ENCODE measurements at regions of chr10 and their contacts with region 1.

Region 1: DNA sequence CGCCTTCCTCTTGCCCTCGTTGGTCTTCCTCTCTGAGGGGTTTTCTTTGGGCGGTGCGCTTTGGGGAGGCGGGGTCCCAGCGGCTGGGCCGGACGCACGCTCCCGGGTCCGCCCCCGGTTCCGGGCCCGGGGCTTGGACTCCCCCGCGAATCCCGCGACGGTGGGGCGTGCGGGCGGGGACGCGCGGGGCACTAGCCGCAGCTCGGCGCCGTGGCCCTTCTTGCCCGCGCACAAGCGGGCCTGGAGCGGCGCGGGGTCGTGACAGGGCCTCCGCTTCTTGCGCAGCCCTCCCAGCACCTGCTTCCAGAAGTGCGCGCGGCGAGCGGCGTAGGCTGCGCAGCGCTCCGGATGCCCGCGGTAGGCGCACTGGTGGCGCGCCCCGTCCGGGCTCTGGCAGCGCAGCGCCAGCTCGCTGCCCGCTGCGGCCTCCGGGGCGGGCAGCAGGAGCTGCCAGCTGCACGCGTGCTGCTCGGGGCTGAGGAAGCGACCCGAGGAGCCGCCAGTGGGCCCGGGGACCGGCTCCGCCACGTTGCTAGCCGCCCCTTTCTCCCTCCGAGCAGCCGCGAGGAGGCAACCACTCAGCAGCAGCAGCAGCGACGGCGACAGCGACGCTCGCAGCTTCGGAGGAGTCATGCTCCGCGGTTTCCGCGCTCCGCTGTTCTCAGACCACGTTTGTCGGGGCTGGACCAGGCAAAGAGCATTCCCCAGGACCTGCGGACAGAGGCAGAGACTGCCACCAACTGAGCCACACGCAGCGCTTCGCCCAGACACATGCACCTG is 759 bp downstream of the FGFBP3 start:
- DNase-seq: peak; percentile 71 to 77 (median 77)
- H3K4me3 ChIP-seq: peak overlapping the region; percentile 68 to 72
- H3K4me3 Mint-ChIP-seq: peak overlapping the region; percentile 89 to 97 (median 93)
- H3K27ac ChIP-seq: peak overlapping the region; percentile 67
- H3K27ac Mint-ChIP-seq: peak overlapping the region; percentile 74 to 94 (median 85)
- H3K4me1 ChIP-seq: peaks cover 25% of the 10 kb centered on the region
- H3K4me1 Mint-ChIP-seq: peaks cover 15 to 26% (median 21%) of the 10 kb centered on the region in 4 donors
- H3K27me3 ChIP-seq: no peaks in the 10 kb centered on the region
- H3K27me3 Mint-ChIP-seq: peaks cover 0 to 4% of the 10 kb centered on the region in 2 donors

Region 2: GRCh38 chr10:91298224-91298871 is 610.2 kb before region 1 on chr10:
- CTCF ChIA-PET with region 1: interaction called, 41 read pairs
- POLR2A ChIA-PET with region 1: no interaction called
- intact Hi-C with region 1: loop called (anchors 1 kb)
- DNase-seq: peak; percentile 75 to 80 (median 77)
- H3K4me3 ChIP-seq: peak overlapping the region; percentile 30 to 55
- H3K4me3 Mint-ChIP-seq: peak overlapping the region; percentile 66 to 81 (median 74)
- H3K27ac ChIP-seq: no peak overlapping the region
- H3K27ac Mint-ChIP-seq: peak overlapping the region in 3 of 7 donors; percentile 3 to 91 (median 59)
- H3K4me1 ChIP-seq: peaks cover 11% of the 10 kb centered on the region
- H3K4me1 Mint-ChIP-seq: peaks cover 0 to 10% (median 7%) of the 10 kb centered on the region in 4 donors
- H3K27me3 ChIP-seq: no peaks in the 10 kb centered on the region
- H3K27me3 Mint-ChIP-seq: peaks cover 2 to 9% of the 10 kb centered on the region in 2 donors

Region 3: DNA sequence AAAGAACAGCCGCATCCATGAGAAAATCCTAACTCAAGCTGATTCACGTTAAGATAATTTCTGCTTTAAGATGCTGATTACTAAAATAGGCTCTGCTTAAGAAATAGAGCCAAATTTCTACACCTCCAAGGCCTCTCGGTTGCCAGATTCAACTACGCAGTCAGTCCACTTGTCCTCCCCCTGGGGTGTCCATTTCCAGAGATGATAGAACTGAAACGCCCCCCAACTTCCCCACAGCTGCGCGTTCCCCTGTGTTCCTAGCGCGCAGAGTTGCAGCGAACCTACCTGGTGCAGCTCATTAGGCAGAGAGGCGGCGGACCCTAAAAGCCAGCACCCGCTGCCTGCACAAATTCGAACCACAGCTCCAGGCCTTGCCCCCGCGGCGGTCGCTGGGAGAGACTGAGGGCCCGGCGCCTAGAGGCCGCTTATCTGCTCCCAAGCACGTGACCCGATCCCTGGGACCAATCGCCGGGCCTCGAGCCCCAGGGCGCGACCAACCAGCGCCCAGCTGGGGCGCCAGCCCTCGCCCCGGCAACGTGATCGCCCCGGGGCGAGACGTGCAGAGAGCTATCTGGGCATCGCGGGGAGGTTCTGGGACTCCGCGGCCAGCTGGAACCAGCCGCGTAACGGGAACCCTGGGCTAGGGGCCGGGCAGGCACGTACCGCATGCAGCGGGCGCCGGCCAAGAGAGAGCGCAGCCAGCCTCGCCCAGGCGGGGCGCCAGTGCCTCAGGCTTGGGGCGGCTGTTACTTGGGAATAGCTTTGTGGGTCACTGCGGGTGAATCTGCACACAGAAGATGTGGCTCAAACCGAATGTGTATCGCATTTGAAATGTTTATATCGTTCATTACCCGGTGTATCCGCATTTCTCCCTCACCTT is 275.6 kb before region 1 on chr10 and contains the start of gene PPP1R3C:
- CTCF ChIA-PET with region 1: interaction called, 5 read pairs
- POLR2A ChIA-PET with region 1: no interaction called
- intact Hi-C with region 1: loop called (anchors 1 kb)
- DNase-seq: peak; percentile 9 to 42 (median 15)
- H3K4me3 ChIP-seq: peak within 1 kb of the TSS in 1 of 2 donors; percentile 12
- H3K4me3 Mint-ChIP-seq: peak within 1 kb of the TSS; percentile 44 to 75 (median 68)
- H3K27ac ChIP-seq: no peak within 1 kb of the TSS
- H3K27ac Mint-ChIP-seq: no peak within 1 kb of the TSS
- H3K4me1 ChIP-seq: peaks cover 4% of the 10 kb centered on the region
- H3K4me1 Mint-ChIP-seq: peaks cover 0 to 8% (median 5%) of the 10 kb centered on the region in 4 donors
- H3K27me3 ChIP-seq: peaks cover 25% of the 10 kb centered on the region
- H3K27me3 Mint-ChIP-seq: peaks cover 44 to 47% of the 10 kb centered on the region in 2 donors
- total RNA-seq, gene PPP1R3C: not detected

Region 4: GRCh38 chr10:91797874-91798648 is 110.5 kb before region 1 on chr10 and contains the start of gene TNKS2:
- CTCF ChIA-PET with region 1: interaction called, 13 read pairs
- POLR2A ChIA-PET with region 1: interaction called, 57 read pairs
- intact Hi-C with region 1: loop called (anchors 1 kb)
- DNase-seq: peak; percentile 88 to 93 (median 92)
- H3K4me3 ChIP-seq: peak within 1 kb of the TSS; percentile 83
- H3K4me3 Mint-ChIP-seq: peak within 1 kb of the TSS; percentile 91 to 99 (median 99)
- H3K27ac ChIP-seq: peak within 1 kb of the TSS; percentile 90
- H3K27ac Mint-ChIP-seq: peak within 1 kb of the TSS; percentile 92 to 100 (median 98)
- H3K4me1 ChIP-seq: peaks cover 53% of the 10 kb centered on the region
- H3K4me1 Mint-ChIP-seq: peaks cover 50 to 72% (median 62%) of the 10 kb centered on the region in 4 donors
- H3K27me3 ChIP-seq: no peaks in the 10 kb centered on the region
- H3K27me3 Mint-ChIP-seq: no peaks in the 10 kb centered on the region
- total RNA-seq, gene TNKS2: 65.5 to 70.0 TPM

Region 5: DNA sequence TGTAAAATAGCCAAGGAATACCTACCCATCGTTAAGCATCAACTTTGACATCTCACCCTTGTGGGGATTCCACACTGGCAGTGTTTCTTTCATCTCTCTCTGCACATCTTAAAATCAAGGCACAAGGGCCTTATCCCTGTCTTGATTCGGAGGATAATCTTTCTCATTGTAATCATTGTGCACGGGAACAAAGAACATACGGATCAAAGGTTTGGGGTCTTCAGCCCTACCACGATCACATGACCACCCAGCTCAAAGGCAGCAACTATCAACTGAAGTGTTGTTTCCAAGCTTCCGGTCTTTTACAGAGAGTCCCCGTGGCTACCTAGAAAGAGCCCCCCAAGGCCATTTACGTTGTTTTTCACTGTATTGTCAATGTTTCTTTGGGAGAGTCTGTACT is 11.1 kb before region 1 on chr10:
- CTCF ChIA-PET with region 1: interaction called, 3 read pairs
- POLR2A ChIA-PET with region 1: interaction called, 17 read pairs
- intact Hi-C with region 1: no loop called
- DNase-seq: no peak
- H3K4me3 ChIP-seq: no peak overlapping the region
- H3K4me3 Mint-ChIP-seq: no peak overlapping the region
- H3K27ac ChIP-seq: no peak overlapping the region
- H3K27ac Mint-ChIP-seq: no peak overlapping the region
- H3K4me1 ChIP-seq: peaks cover 14% of the 10 kb centered on the region
- H3K4me1 Mint-ChIP-seq: peaks cover 9 to 20% (median 13%) of the 10 kb centered on the region in 4 donors
- H3K27me3 ChIP-seq: no peaks in the 10 kb centered on the region
- H3K27me3 Mint-ChIP-seq: peaks cover 3 to 4% of the 10 kb centered on the region in 2 donors

Region 6: GRCh38 chr10:92027141-92027540 is 118.6 kb after region 1 on chr10:
- CTCF ChIA-PET with region 1: no interaction called
- POLR2A ChIA-PET with region 1: no interaction called
- intact Hi-C with region 1: no loop called
- DNase-seq: no peak
- H3K4me3 ChIP-seq: no peak overlapping the region
- H3K4me3 Mint-ChIP-seq: no peak overlapping the region
- H3K27ac ChIP-seq: no peak overlapping the region
- H3K27ac Mint-ChIP-seq: no peak overlapping the region
- H3K4me1 ChIP-seq: no peaks in the 10 kb centered on the region
- H3K4me1 Mint-ChIP-seq: no peaks in the 10 kb centered on the region
- H3K27me3 ChIP-seq: no peaks in the 10 kb centered on the region
- H3K27me3 Mint-ChIP-seq: no peaks in the 10 kb centered on the region